ENCODE measurements at regions of chr10 and their contacts with region 1.

Region 1: GRCh38 chr10:130110246-130111112 is at the start of gene C10orf143:
- DNase-seq: peak; percentile 92 to 97 (median 95)
- H3K4me3 ChIP-seq: peak within 1 kb of the TSS; percentile 78 to 93 (median 91)
- H3K4me3 Mint-ChIP-seq: peak within 1 kb of the TSS; percentile 94 to 99
- H3K27ac ChIP-seq: peak within 1 kb of the TSS; percentile 82 to 95
- H3K27ac Mint-ChIP-seq: peak within 1 kb of the TSS; percentile 89 to 98 (median 97)
- H3K4me1 ChIP-seq: peaks cover 21 to 29% of the 10 kb centered on the region in 2 donors
- H3K4me1 Mint-ChIP-seq: peaks cover 28% of the 10 kb centered on the region
- H3K27me3 ChIP-seq: no peaks in the 10 kb centered on the region
- H3K27me3 Mint-ChIP-seq: peaks cover 2 to 3% (median 2%) of the 10 kb centered on the region in 3 donors
- CTCF ChIP-seq: no peak
- polyA plus RNA-seq, gene C10orf143: 3.6 to 11.6 (median 8.0) TPM

Region 2: GRCh38 chr10:129466703-129467358 is 643.6 kb before region 1 on chr10 and contains the start of gene MGMT:
- intact Hi-C with region 1: loop called in 1 of 2 experiments (anchors 10 kb)
- DNase-seq: peak; percentile 82 to 87 (median 86)
- H3K4me3 ChIP-seq: peak within 1 kb of the TSS; percentile 77 to 85 (median 80)
- H3K4me3 Mint-ChIP-seq: peak within 1 kb of the TSS; percentile 73 to 75
- H3K27ac ChIP-seq: peak within 1 kb of the TSS in 1 of 2 donors; percentile 70
- H3K27ac Mint-ChIP-seq: peak within 1 kb of the TSS in 3 of 7 donors; percentile 37 to 85 (median 63)
- H3K4me1 ChIP-seq: peaks cover 12 to 18% of the 10 kb centered on the region in 2 donors
- H3K4me1 Mint-ChIP-seq: peaks cover 6% of the 10 kb centered on the region
- H3K27me3 ChIP-seq: no peaks in the 10 kb centered on the region
- H3K27me3 Mint-ChIP-seq: peaks cover 0 to 6% (median 3%) of the 10 kb centered on the region in 3 donors
- CTCF ChIP-seq: no peak
- polyA plus RNA-seq, gene MGMT: 9.5 to 23.5 (median 17.5) TPM

Region 3: GRCh38 chr10:130064783-130065182 is 45.7 kb before region 1 on chr10:
- intact Hi-C with region 1: no loop called
- DNase-seq: no peak
- H3K4me3 ChIP-seq: no peak overlapping the region
- H3K4me3 Mint-ChIP-seq: no peak overlapping the region
- H3K27ac ChIP-seq: no peak overlapping the region
- H3K27ac Mint-ChIP-seq: no peak overlapping the region
- H3K4me1 ChIP-seq: no peaks in the 10 kb centered on the region
- H3K4me1 Mint-ChIP-seq: no peaks in the 10 kb centered on the region
- H3K27me3 ChIP-seq: no peaks in the 10 kb centered on the region
- H3K27me3 Mint-ChIP-seq: no peaks in the 10 kb centered on the region
- CTCF ChIP-seq: no peak

Region 4: GRCh38 chr10:130136226-130137089 is 26.0 kb after region 1 on chr10 and contains the start of gene GLRX3:
- intact Hi-C with region 1: loop called (anchors 1 kb)
- DNase-seq: peak; percentile 71 to 82 (median 80)
- H3K4me3 ChIP-seq: peak within 1 kb of the TSS; percentile 53 to 86 (median 62)
- H3K4me3 Mint-ChIP-seq: peak within 1 kb of the TSS; percentile 92
- H3K27ac ChIP-seq: peak within 1 kb of the TSS; percentile 17 to 76
- H3K27ac Mint-ChIP-seq: peak within 1 kb of the TSS; percentile 48 to 93 (median 78)
- H3K4me1 ChIP-seq: peaks cover 19 to 41% of the 10 kb centered on the region in 2 donors
- H3K4me1 Mint-ChIP-seq: peaks cover 43% of the 10 kb centered on the region
- H3K27me3 ChIP-seq: no peaks in the 10 kb centered on the region
- H3K27me3 Mint-ChIP-seq: peaks cover 8 to 20% (median 11%) of the 10 kb centered on the region in 3 donors
- CTCF ChIP-seq: no peak
- polyA plus RNA-seq, gene GLRX3: 25.3 to 94.1 (median 78.2) TPM

Region 5: DNA sequence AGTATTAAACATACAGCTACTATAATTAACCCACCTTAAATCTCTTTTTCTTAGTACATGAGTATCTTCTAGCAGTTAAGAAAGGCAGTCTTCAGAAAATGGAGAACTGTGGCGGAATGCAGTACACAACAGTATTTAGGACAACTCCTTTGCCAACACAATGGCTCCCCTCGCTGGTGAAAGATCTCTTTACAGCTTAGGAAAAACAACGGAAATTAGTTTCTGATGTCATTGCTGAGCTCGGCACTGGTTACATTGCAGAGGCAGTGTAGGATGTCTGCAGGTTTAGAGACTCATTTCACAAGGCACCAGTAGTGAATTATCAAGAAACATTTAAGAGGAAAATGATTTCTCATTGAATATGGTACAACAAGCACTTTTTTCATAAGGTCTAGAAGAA is 69.2 kb after region 1 on chr10:
- intact Hi-C with region 1: no loop called
- DNase-seq: no peak
- H3K4me3 ChIP-seq: no peak overlapping the region
- H3K4me3 Mint-ChIP-seq: no peak overlapping the region
- H3K27ac ChIP-seq: no peak overlapping the region
- H3K27ac Mint-ChIP-seq: no peak overlapping the region
- H3K4me1 ChIP-seq: no peaks in the 10 kb centered on the region
- H3K4me1 Mint-ChIP-seq: peaks cover 3% of the 10 kb centered on the region
- H3K27me3 ChIP-seq: no peaks in the 10 kb centered on the region
- H3K27me3 Mint-ChIP-seq: peaks cover 0 to 1% (median 0%) of the 10 kb centered on the region in 3 donors
- CTCF ChIP-seq: peak; percentile 22

Region 6: DNA sequence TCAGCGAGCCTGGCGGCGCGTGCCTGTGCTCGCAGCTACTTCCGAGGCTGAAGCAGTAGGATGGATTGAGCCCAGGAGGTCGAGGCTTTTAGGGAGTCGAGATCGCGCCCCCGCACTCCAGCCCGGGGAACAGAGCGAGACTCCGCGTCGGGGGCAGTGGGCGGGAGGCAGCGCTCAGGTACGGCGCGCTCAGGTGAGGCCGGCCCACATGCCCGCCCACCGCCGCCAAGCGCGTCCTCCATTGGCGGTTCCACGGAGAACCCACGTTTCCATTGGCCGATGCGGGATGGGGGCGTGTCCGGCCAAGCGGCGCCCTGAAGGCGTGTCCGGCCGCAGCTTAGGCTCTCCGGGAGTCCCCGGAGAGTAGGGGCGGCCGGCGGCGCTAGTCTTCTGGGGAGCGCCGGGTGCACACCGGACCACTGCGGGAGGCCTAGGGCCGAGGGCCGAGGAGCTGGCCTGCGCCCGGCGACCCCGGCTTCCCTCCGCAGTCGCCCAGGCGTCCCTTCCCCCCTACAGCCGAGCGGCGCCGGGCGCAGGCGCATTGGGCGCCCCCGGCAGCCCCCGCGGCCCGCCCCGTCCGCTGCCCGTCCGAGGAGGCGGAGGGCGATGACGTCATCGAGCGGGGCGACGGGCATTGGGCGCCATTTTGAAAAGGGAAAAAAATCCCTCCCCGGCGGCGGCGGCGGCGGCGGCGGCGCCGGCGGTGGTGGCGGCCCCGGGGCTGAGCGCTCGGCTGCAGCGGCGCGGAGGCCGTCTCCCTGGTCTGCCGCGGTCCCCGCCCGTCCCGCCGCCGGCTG is 1790.1 kb after region 1 on chr10 and contains the start of gene PPP2R2D:
- intact Hi-C with region 1: loop called in 1 of 2 experiments (anchors 5 kb)
- DNase-seq: peak; percentile 88 to 93 (median 91)
- H3K4me3 ChIP-seq: peak within 1 kb of the TSS; percentile 80 to 86 (median 80)
- H3K4me3 Mint-ChIP-seq: peak within 1 kb of the TSS; percentile 87 to 90
- H3K27ac ChIP-seq: peak within 1 kb of the TSS; percentile 74 to 78
- H3K27ac Mint-ChIP-seq: peak within 1 kb of the TSS; percentile 84 to 92 (median 87)
- H3K4me1 ChIP-seq: peaks cover 23 to 39% of the 10 kb centered on the region in 2 donors
- H3K4me1 Mint-ChIP-seq: peaks cover 46% of the 10 kb centered on the region
- H3K27me3 ChIP-seq: peaks cover 0 to 7% of the 10 kb centered on the region in 2 donors
- H3K27me3 Mint-ChIP-seq: peaks cover 11 to 27% (median 16%) of the 10 kb centered on the region in 3 donors
- CTCF ChIP-seq: no peak
- polyA plus RNA-seq, gene PPP2R2D: 12.8 to 23.5 (median 12.9) TPM